ENCODE measurements at regions of chrX and their contacts with region 1.

Region 1: GRCh38 chrX:13101441-13102139 is 57.2 kb upstream of the FAM9C start:
- DNase-seq: peak; percentile 97
- H3K4me3 ChIP-seq: no peak overlapping the region
- H3K27ac ChIP-seq: peak overlapping the region; percentile 68
- H3K4me1 ChIP-seq: peaks cover 26% of the 10 kb centered on the region
- H3K27me3 ChIP-seq: no peaks in the 10 kb centered on the region
- CTCF ChIP-seq: no peak

Region 2: DNA sequence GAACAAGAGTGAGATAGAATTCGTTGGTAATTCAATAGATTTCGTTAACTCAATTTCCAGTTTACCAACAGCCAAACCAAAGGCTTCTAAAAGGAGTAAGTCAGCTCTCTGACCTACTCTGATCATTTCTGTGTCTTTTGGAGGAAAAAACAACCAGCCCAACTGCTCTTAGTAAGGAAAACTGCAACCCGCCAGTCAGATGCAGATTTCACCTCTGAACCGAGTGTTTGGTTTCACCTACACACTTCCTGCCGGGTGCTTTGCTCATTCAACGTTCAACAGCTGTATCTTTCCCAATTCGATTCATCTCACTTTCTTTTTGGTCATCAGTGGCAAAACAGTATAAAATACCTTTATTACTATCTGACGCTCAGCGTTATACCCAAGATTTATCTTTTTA is 102.2 kb before region 1 on chrX:
- CTCF ChIA-PET with region 1: no interaction called
- dilution Hi-C with region 1: no loop called
- in situ Hi-C with region 1: no loop called
- intact Hi-C with region 1: loop called (anchors 2 kb)
- DNase-seq: no peak
- H3K4me3 ChIP-seq: no peak overlapping the region
- H3K27ac ChIP-seq: no peak overlapping the region
- H3K4me1 ChIP-seq: peaks cover 21% of the 10 kb centered on the region
- H3K27me3 ChIP-seq: no peaks in the 10 kb centered on the region
- CTCF ChIP-seq: no peak

Measured in mammary epithelial cell (primary cell).